ENCODE measurements at regions of chr21 and their contacts with region 1.

Region 1: DNA sequence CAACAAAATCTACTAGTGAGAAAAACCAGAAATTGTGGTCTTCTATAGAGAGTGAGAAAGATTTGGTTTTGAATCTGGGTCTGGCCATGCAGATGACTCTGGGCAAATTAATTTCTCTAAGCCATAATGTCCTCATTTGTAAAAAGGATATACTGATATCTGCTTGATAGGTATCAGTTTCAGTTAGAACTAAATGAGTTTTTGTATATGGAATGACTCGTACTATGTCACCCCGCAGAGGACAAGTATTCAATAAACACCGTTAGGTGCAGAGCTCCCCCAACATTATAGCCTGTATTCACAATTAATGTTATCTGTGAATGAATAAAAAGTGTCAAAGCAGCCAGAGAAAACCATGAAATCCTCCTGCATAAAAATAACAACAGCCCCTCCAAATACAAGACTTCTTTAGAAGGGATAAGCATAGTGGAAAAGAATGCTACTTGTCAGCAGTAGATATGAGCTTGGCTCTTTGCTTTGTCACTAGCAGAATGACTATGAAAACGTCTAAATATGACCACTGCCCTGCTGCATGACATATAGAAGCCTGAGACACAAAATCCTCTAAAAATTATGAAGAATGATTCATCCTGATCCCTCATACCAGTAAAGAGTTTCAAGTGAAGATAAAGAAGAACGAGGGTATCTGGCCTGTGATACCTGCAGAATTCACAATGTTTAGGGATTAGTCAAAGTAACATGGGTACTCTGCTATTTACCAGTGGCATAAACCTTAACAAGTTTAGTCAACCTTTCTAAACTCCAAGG is 17.8 kb downstream of the SCAF4 start:
- DNase-seq: no peak
- H3K4me3 Mint-ChIP-seq: no peak overlapping the region
- H3K27ac Mint-ChIP-seq: peak overlapping the region; percentile 87
- H3K4me1 Mint-ChIP-seq: peaks cover 39% of the 10 kb centered on the region
- H3K27me3 Mint-ChIP-seq: no peaks in the 10 kb centered on the region

Region 2: DNA sequence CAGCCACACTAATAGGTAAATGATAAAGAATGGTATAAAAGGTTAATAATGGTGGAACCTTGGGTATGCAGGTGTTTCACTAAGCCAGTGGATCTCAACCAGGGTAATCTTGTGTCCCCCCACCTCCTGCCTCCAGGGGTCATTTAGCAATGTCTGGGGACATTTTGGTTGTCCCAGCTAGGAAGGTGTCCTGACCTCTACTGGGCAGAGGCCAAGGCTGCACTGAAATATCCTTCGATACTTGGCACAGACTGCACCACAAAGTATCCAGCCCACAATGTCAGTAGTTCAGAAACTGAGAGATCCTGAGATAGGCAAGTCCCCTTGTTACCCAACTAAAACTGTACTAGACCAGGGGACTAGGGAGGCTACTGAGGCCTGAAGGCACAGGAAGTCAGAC is 256.5 kb before region 1 on chr21:
- intact Hi-C with region 1: no loop called
- DNase-seq: no peak
- H3K4me3 Mint-ChIP-seq: no peak overlapping the region
- H3K27ac Mint-ChIP-seq: no peak overlapping the region
- H3K4me1 Mint-ChIP-seq: no peaks in the 10 kb centered on the region
- H3K27me3 Mint-ChIP-seq: peaks cover 20% of the 10 kb centered on the region

Region 3: DNA sequence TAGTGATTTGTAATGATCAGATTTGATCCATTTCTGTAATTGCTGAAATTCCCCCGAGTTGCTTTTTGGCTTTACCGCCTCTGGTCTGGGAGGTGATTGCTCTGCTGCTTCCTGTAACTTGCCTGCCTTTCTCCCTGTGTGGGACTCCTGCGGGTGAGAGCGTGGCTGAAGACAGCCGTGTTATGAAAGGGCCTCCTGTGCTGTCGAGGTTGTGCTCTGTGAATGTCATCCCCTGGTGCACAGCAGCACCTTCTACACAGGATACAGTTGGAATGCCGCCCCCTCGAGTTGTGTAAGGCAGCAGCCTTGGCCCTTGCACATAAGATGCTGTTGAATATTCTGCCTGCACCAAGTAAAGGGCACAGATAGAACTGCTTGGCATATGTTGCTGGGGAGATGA is 48.8 kb before region 1 on chr21:
- intact Hi-C with region 1: loop called (anchors 5 kb)
- DNase-seq: no peak
- H3K4me3 Mint-ChIP-seq: peak overlapping the region; percentile 35
- H3K27ac Mint-ChIP-seq: peak overlapping the region; percentile 50
- H3K4me1 Mint-ChIP-seq: peaks cover 55% of the 10 kb centered on the region
- H3K27me3 Mint-ChIP-seq: no peaks in the 10 kb centered on the region

Region 4: DNA sequence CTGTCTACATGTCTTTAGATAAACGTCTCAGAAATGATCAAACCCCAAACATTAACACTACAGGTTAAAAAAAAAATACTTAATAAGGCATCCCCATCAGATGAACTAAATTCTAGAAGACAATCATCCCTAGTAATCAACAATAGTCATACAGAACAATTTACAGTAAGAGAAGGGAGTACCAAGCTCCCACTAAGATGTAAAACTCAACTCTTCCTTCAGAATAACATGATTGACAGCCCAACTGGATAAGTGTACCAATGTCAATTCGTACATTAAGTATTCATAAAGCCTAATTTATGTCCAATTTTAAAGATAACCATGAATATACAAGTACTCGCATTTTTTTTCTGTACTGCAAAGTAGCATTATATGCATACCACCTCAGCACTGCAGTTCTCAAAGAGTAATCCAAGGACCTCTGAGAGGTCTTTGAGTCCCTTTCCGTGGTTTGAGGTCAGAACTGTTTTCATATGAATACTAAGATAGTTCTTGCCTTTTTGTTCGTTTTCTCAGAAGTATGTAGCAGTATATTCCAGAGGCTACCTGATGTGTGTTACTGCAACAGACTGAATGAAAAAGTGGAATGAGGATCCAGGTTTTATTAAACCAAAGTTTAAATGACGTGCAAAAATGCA is 11.2 kb after region 1 on chr21:
- intact Hi-C with region 1: loop called (anchors 1 kb)
- DNase-seq: no peak
- H3K4me3 Mint-ChIP-seq: no peak overlapping the region
- H3K27ac Mint-ChIP-seq: peak overlapping the region; percentile 4
- H3K4me1 Mint-ChIP-seq: peaks cover 28% of the 10 kb centered on the region
- H3K27me3 Mint-ChIP-seq: no peaks in the 10 kb centered on the region

Measured in activated T-helper 2 cell treated with anti-CD3 and anti-CD28 coated beads, Interferon-gamma antibody, Interleukin-2, Interleukin-4, amounts not matched to agents 10 μg/mL and 5 μg/mL and 100 μg/mL, durations not matched to agents 14 hours and 24 hours and 36 hours (primary cell).